ENCODE measurements at regions of chr15 and their contacts with region 1.

Region 1: DNA sequence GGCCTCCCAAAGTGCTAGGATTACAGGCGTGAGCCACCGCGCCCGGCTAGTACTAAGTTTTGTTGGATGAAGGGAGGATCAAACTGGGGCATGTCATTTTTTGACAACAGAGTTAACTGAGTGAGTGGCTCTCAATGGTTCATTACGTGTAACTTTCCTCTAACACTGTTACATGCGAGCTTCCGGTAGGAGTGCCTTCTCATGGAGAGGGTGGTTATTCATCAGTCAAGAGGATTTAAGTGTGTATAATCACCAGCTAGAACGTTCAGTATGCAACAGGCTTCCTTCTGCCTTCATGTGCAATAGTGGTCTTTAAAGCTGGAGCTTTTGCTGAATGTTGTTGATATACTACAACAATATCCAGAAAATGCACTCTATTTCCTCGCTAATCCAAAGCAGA is 19.1 kb upstream of the GOLGA8A start:
- DNase-seq: no peak
- H3K4me3 Mint-ChIP-seq: no peak overlapping the region
- H3K27ac Mint-ChIP-seq: no peak overlapping the region
- H3K4me1 Mint-ChIP-seq: no peaks in the 10 kb centered on the region
- H3K27me3 Mint-ChIP-seq: peaks cover 47% of the 10 kb centered on the region

Region 2: DNA sequence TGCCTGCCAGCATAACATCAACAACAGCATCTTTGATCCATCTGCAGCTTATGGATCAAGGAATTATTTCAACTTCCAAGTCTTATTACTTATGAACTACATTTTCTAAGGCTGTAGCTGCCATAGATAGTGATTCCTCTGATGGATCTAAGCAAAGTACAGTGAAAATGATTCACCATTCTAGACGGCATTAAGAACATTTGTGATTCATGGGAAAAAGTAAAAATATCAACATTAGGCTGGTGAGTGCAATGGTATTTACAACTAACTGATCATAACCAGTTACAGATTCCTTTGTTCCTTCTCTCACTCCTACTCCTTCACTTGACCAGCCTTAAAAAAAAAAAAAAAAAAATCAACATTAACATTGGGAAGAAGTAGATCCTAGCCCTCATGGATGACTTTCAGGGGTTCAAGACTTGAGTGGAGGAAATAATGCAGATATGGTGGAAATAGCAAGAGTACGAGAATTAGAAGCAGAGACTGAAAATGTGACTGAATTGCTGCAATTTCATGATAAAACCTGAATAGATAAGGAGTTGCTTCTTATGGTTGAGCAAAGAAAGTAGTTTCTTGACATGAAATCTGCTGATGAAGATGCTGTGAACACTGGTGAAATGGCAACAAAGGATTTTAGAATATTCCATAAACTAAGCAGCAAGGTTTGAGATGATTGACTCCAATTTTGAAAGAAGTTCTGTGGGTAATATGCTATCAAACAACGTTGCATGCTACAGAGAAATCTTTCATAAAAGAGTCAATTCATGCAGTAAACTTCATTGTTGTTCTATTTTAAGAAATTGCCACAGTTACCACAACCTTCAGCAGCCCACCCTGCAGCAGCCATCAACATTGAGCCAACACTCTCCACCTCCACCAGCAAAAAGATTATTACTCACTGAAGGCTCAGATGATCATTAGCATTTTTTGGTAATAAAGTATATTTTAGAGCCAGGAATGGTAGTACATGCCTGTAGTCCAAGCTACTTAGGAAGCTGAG is 141.9 kb before region 1 on chr15:
- intact Hi-C with region 1: no loop called
- DNase-seq: no peak
- H3K4me3 Mint-ChIP-seq: no peak overlapping the region
- H3K27ac Mint-ChIP-seq: peak overlapping the region; percentile 21
- H3K4me1 Mint-ChIP-seq: peaks cover 49% of the 10 kb centered on the region
- H3K27me3 Mint-ChIP-seq: no peaks in the 10 kb centered on the region

Region 3: GRCh38 chr15:34496207-34496995 is 39.7 kb after region 1 on chr15:
- intact Hi-C with region 1: loop called (anchors 5 kb)
- DNase-seq: no peak
- H3K4me3 Mint-ChIP-seq: no peak overlapping the region
- H3K27ac Mint-ChIP-seq: no peak overlapping the region
- H3K4me1 Mint-ChIP-seq: no peaks in the 10 kb centered on the region
- H3K27me3 Mint-ChIP-seq: peaks cover 70% of the 10 kb centered on the region

Region 4: DNA sequence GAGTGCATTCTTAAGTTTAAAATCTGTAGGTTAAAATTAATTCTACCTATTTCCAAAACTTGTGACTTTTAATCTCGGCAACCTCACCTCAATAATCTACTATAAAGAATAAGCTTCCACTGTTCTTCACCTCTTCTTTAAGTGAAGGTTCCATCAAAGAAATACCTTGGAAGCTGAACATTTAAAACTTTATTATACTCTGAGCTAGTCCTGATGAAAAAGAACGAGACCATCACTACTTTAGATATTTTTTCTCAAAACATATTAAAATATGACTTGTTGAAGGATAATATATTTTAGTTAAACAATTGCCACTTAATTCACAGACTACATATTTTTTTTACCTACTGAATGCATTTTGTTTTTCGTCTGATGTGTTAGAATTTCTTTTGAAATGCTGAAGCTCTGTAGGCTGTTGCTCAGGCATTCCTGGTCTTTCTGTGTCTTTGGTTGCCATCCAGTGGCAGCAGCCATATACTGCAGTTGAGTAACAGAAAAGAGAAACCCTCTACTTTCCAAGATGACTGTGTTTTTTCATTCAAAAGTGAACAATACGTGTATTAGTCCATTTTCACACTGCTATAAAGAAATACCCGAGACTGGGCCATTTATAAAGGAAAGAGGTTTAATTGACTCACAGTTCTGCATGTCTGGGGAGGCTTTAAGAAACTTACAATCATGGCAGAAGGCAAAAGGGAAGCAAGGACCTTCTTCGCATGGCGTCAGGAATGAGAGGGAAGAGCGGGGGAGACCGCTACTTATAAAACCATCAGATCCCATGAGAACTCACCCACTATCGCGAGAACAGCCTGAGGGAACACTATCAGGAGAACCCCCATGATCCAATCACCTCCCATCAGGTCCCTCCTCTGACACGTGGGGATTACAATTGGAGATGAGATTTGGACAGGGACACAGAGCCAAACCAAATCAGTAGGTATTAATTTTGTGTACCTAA is 131.3 kb after region 1 on chr15:
- intact Hi-C with region 1: no loop called
- DNase-seq: peak; percentile 55
- H3K4me3 Mint-ChIP-seq: peak overlapping the region; percentile 78
- H3K27ac Mint-ChIP-seq: peak overlapping the region; percentile 7
- H3K4me1 Mint-ChIP-seq: peaks cover 20% of the 10 kb centered on the region
- H3K27me3 Mint-ChIP-seq: peaks cover 17% of the 10 kb centered on the region

Region 5: GRCh38 chr15:35545824-35546510 is 1089.3 kb after region 1 on chr15 and contains the start of gene DPH6:
- intact Hi-C with region 1: no loop called
- DNase-seq: peak; percentile 78
- H3K4me3 Mint-ChIP-seq: peak within 1 kb of the TSS; percentile 92
- H3K27ac Mint-ChIP-seq: peak within 1 kb of the TSS; percentile 96
- H3K4me1 Mint-ChIP-seq: peaks cover 16% of the 10 kb centered on the region
- H3K27me3 Mint-ChIP-seq: no peaks in the 10 kb centered on the region
- total RNA-seq, gene DPH6: 11.2 and 13.2 TPM in 2 replicates